ENCODE measurements at regions of chr18 and their contacts with region 1.

Region 1: GRCh38 chr18:74652392-74652988 is 54.8 kb downstream of the ZNF407 start:
- DNase-seq: no peak
- H3K4me3 ChIP-seq: no peak overlapping the region
- H3K27ac ChIP-seq: no peak overlapping the region
- H3K4me1 ChIP-seq: no peaks in the 10 kb centered on the region
- H3K27me3 ChIP-seq: no peaks in the 10 kb centered on the region
- CTCF ChIP-seq: peak; percentile 46

Region 2: DNA sequence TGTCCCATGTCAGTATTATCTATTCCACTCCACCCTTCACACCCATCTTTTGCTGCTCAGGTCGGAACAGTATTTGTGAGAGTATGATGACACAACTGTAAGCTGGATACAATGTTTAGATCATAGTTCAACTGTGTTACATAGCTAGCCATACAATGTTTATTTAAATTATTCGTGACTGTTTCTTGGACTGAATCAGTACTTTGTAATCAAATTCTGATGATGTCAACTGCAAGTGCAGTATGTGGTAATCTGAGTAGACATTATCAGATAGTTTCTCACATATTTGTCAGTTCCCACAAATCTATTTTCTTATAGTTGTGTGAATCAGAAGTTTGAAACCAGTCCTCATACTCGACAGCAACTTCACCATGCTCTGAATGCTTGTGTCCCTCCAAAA is 122.7 kb after region 1 on chr18:
- intact Hi-C with region 1: no loop called
- DNase-seq: no peak
- H3K4me3 ChIP-seq: no peak overlapping the region
- H3K27ac ChIP-seq: no peak overlapping the region
- H3K4me1 ChIP-seq: no peaks in the 10 kb centered on the region
- H3K27me3 ChIP-seq: no peaks in the 10 kb centered on the region
- CTCF ChIP-seq: no peak

Region 3: DNA sequence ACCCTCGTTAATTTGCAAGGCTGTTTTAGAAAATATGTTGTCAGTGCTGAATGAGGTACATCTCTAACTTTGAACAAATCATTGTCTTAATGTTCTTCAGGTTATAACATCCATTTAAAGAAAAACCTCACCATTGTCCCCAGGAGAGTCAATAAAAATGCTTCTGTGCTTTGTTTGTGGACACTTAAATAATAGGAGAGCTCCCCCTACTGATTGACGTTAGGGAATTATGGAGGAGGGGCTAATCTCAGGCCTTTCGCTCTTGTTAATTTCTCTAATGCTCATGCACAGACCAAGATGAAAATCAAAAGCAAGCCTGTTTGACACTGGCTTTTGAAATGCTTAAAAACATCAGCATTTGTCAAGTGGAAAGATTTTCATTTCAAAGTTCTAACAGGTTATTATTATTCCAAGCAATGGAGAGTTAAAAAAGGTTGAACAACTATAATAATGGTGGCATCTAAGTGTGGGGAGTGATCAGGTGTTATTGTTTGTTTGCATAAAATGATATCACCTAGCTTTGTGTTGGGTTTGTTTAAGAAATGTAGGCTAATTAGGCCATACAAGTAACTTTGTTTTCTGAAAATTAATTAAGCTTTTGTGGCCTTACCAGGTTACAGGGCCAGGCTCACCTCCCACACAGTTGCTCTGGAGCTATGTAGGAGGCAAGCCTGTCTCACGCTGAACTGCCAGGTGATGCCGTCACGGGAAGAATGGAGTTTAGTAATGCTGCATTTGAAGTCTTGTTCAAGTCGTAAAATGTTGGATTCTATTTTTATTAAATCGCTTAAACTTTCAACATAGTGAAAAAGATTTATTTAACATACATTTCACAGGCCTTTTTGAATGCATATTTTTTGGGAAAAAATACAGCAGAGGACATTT is 826.7 kb after region 1 on chr18:
- intact Hi-C with region 1: loop called (anchors 10 kb)
- DNase-seq: no peak
- H3K4me3 ChIP-seq: no peak overlapping the region
- H3K27ac ChIP-seq: no peak overlapping the region
- H3K4me1 ChIP-seq: no peaks in the 10 kb centered on the region
- H3K27me3 ChIP-seq: no peaks in the 10 kb centered on the region
- CTCF ChIP-seq: peak; percentile 47

Region 4: GRCh38 chr18:75727456-75727855 is 1075.0 kb after region 1 on chr18:
- intact Hi-C with region 1: loop called (anchors 10 kb)
- DNase-seq: peak; percentile 28
- H3K4me3 ChIP-seq: no peak overlapping the region
- H3K27ac ChIP-seq: no peak overlapping the region
- H3K4me1 ChIP-seq: no peaks in the 10 kb centered on the region
- H3K27me3 ChIP-seq: no peaks in the 10 kb centered on the region
- CTCF ChIP-seq: no peak

Region 5: DNA sequence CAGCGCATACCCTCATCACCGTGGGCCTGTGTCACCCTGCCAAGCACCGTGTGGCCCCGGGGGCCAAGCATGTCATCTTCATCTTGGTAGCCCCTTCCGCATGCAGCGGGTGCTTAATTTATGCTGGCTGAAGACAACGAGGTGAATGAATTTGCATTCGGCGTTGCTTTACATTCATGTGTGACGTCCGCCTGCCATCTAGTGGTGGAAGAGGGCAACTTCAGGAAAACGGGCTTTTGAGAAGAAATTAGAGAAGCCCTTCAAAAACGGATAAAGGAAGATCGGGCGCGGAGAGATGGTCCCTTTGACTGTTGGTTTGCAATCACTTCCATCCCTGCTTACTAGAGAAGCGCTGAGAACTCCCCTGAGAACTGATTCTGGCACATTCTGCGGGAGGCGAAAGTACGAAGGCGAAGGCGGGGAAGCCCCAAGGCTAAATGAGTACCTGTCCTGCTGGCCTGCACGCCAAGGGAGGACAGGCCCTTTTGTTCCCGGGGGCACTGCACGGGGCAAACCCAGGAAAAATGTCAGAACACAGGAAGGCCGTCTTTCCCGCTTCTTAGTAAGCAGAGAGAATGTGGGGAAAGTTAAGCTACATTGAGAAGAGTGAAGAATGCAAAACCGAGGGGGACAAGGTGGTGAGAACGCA is 1696.7 kb after region 1 on chr18:
- intact Hi-C with region 1: loop called (anchors 10 kb)
- DNase-seq: peak; percentile 73
- H3K4me3 ChIP-seq: peak overlapping the region; percentile 1
- H3K27ac ChIP-seq: no peak overlapping the region
- H3K4me1 ChIP-seq: peaks cover 6% of the 10 kb centered on the region
- H3K27me3 ChIP-seq: no peaks in the 10 kb centered on the region
- CTCF ChIP-seq: peak; percentile 79